ENCODE measurements at regions of chr18 and their contacts with region 1.

Region 1: DNA sequence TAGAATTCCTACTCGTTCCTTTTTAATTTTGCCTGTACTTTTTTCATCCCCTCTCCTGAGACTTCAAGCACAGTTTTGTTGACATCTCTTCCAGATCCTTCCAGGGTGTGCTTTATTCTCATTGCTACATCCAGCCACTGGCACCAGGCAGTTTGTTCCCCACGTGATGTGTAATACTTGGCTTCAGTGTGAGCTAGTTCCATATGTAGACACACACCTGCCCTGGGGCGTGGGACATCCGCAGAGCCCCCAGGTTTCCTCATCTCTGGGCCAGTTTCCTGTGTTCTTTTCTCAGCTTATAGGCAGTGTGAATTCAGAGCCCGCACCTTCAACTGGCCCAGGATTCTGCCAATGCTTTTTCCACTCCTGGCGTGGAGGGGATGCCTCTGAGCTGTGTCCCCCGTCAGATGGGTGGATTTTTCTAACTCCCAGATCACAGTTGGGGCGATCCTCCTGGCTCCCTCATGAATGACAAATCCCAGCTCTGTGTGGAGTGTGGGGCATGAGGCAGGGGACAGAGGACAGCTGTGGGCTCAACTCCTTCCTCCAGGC is 46.6 kb downstream of the DIPK1C start:
- DNase-seq: no peak
- H3K4me3 ChIP-seq: no peak overlapping the region
- H3K27ac ChIP-seq: no peak overlapping the region
- H3K4me1 ChIP-seq: no peaks in the 10 kb centered on the region
- H3K27me3 ChIP-seq: peaks cover 97% of the 10 kb centered on the region
- CTCF ChIP-seq: no peak

Region 2: DNA sequence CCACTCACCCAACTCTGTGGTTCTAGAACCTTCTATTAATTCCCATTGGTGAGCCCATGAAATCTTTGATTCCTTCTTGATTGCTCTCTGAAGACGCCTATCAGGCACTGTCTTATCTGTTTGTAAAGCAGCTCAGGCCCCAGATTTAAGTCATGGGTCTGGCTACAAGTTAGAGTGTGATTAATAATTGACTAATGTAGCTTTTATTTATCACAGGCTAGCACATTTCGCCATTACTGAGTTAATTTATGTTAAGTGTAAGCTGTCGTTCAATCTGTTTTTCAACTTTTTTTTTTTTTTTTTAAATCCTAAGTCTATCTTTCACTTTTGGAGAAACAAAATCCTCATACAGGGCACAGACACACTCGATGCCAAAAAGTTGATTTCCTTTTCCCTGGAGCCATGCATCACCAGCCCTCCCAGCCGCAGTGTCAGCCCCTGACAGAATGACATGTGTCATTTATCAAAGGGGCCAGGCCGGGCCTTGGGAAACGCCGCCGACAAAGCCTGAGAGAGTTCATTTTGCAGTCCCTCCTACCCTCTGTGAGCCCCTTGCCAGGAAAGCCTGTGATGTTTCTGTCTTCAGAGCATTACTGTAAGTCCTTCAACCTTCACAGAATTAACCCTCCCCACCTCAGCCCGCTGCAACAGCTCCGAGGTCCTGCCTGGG is 815.9 kb after region 1 on chr18:
- CTCF ChIA-PET with region 1: no interaction called
- POLR2A ChIA-PET with region 1: interaction called, 11 read pairs
- intact Hi-C with region 1: no loop called
- DNase-seq: no peak
- H3K4me3 ChIP-seq: no peak overlapping the region
- H3K27ac ChIP-seq: no peak overlapping the region
- H3K4me1 ChIP-seq: no peaks in the 10 kb centered on the region
- H3K27me3 ChIP-seq: no peaks in the 10 kb centered on the region
- CTCF ChIP-seq: no peak

Measured in PC-9 (cell line).